ENCODE measurements at regions of chr16 and their contacts with region 1.

Region 1: GRCh38 chr16:11742539-11743307 is at the start of gene TXNDC11:
- DNase-seq: peak; percentile 98 to 100 (median 100)
- ATAC-seq: peak; percentile 98
- H3K4me3 ChIP-seq: peak within 1 kb of the TSS; percentile 92
- H3K4me3 Mint-ChIP-seq: peak within 1 kb of the TSS; percentile 91 to 98 (median 94)
- H3K27ac ChIP-seq: peak within 1 kb of the TSS; percentile 90
- H3K27ac Mint-ChIP-seq: peak within 1 kb of the TSS; percentile 91 to 99 (median 98)
- H3K4me1 ChIP-seq: peaks cover 26 to 28% of the 10 kb centered on the region in 2 donors
- H3K4me1 Mint-ChIP-seq: peaks cover 39 to 55% (median 51%) of the 10 kb centered on the region in 7 donors
- H3K27me3 ChIP-seq: no peaks in the 10 kb centered on the region
- H3K27me3 Mint-ChIP-seq: no peaks in the 10 kb centered on the region
- total RNA-seq, gene TXNDC11: 41.2 to 80.5 (median 55.1) TPM

Region 2: DNA sequence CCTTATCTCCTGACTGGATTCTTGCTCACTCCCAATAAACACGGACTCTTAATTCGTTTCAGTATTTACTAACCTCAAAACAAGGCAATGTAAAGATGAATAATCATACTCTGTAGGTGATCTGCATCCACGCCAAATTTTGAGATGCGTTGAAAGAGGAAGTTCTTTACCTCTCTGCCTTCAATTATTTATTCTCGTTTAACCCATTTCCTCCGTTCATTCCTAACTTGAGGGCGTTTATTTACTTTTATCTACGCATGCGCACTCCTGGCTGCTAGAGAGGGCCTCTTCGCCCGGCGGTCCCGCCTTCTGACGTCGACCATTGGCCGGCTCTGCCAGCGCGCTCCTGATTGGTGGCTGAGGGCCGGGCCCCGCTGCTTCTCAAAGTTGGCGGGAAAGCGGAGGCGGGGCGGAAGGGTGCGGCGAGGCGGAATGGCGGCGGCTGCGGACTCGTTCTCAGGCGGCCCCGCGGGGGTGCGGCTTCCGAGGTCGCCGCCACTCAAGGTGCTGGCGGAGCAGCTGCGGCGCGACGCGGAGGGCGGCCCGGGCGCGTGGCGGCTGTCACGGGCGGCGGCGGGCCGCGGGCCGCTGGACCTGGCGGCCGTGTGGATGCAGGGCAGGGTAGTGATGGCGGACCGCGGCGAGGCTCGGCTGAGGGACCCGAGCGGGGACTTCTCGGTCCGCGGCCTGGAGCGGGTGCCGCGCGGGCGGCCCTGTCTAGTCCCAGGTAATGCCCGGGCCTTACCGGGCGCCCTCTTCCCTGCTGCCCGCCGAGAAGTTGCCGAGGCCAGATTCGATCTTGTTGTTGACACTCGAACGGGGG is 397.5 kb before region 1 on chr16 and contains the start of gene RMI2:
- CTCF ChIA-PET with region 1: no interaction called
- POLR2A ChIA-PET with region 1: no interaction called
- intact Hi-C with region 1: loop called in 1 of 2 experiments (anchors 1 kb)
- DNase-seq: peak; percentile 90 to 98 (median 95)
- ATAC-seq: peak; percentile 99
- H3K4me3 ChIP-seq: peak within 1 kb of the TSS; percentile 44
- H3K4me3 Mint-ChIP-seq: peak within 1 kb of the TSS; percentile 79 to 98 (median 92)
- H3K27ac ChIP-seq: peak within 1 kb of the TSS; percentile 65
- H3K27ac Mint-ChIP-seq: peak within 1 kb of the TSS; percentile 58 to 99 (median 83)
- H3K4me1 ChIP-seq: no peaks in the 10 kb centered on the region
- H3K4me1 Mint-ChIP-seq: peaks cover 10 to 49% (median 24%) of the 10 kb centered on the region in 7 donors
- H3K27me3 ChIP-seq: no peaks in the 10 kb centered on the region
- H3K27me3 Mint-ChIP-seq: no peaks in the 10 kb centered on the region
- total RNA-seq, gene RMI2: 1.8 to 57.0 (median 3.3) TPM

Region 3: GRCh38 chr16:11667824-11668622 is 74.7 kb before region 1 on chr16 and contains the start of gene SNN:
- CTCF ChIA-PET with region 1: no interaction called
- POLR2A ChIA-PET with region 1: interaction called, 5 read pairs
- intact Hi-C with region 1: loop called (anchors 1 kb)
- DNase-seq: peak; percentile 76 to 91 (median 83)
- ATAC-seq: peak; percentile 89
- H3K4me3 ChIP-seq: peak within 1 kb of the TSS; percentile 77
- H3K4me3 Mint-ChIP-seq: peak within 1 kb of the TSS; percentile 88 to 96 (median 91)
- H3K27ac ChIP-seq: peak within 1 kb of the TSS; percentile 85
- H3K27ac Mint-ChIP-seq: peak within 1 kb of the TSS; percentile 85 to 98 (median 96)
- H3K4me1 ChIP-seq: peaks cover 36 to 80% of the 10 kb centered on the region in 2 donors
- H3K4me1 Mint-ChIP-seq: peaks cover 53 to 87% (median 71%) of the 10 kb centered on the region in 7 donors
- H3K27me3 ChIP-seq: no peaks in the 10 kb centered on the region
- H3K27me3 Mint-ChIP-seq: no peaks in the 10 kb centered on the region
- total RNA-seq, gene SNN: 17.0 to 86.8 (median 34.4) TPM

Region 4: GRCh38 chr16:11816103-11816502 is 73.4 kb after region 1 on chr16:
- CTCF ChIA-PET with region 1: interaction called, 6 read pairs
- POLR2A ChIA-PET with region 1: interaction called, 3 read pairs
- intact Hi-C with region 1: loop called in 1 of 2 experiments (anchors 1 kb)
- DNase-seq: no peak
- ATAC-seq: no peak
- H3K4me3 ChIP-seq: no peak overlapping the region
- H3K4me3 Mint-ChIP-seq: no peak overlapping the region
- H3K27ac ChIP-seq: no peak overlapping the region
- H3K27ac Mint-ChIP-seq: no peak overlapping the region
- H3K4me1 ChIP-seq: no peaks in the 10 kb centered on the region
- H3K4me1 Mint-ChIP-seq: peaks cover 0 to 6% (median 3%) of the 10 kb centered on the region in 7 donors
- H3K27me3 ChIP-seq: no peaks in the 10 kb centered on the region
- H3K27me3 Mint-ChIP-seq: no peaks in the 10 kb centered on the region

Region 5: DNA sequence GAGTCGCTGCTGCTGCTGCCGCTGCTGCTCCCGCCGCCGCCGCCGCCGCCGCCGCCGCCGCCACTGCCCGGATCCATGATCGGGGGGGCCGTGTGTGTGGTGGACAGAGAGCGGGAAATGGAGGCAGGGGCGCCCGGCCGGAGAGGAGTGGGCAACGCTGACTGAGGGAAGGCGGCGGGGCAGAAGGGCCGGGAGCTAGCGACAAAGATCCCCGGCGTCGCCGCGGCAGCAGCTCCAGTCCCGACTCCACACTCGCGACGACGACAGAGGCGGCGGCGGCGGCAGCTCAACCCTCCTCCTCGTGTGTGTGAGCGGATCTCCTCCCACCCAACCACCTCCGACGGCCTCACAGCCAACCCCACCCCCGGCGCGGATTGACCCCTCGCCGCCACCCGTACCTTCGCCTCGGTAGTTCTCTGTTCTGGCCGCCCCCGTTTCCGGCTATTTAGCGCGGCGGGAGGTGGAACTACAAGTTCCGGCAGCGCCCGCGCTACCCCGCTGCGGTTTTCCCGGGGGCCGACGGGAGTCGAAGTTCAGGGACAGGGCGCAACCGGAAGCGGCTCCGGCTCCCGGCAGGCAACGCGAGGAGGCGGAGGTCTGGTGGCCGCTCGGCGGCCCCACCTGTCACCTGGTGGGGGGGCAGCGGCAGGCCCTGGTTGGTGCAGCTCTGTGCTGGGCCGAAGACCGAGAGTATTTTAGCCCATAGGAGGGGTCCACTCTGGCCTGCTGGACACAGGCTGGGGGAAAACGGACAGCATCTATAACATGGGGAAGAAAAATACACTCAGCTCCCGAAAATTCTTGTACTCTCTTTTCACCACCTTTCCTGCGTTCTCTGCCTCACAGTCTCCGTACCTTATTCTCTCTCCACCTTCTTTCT is 173.2 kb after region 1 on chr16 and contains the start of gene GSPT1:
- CTCF ChIA-PET with region 1: no interaction called
- POLR2A ChIA-PET with region 1: interaction called, 5 read pairs
- intact Hi-C with region 1: loop called (anchors 1 kb)
- DNase-seq: peak; percentile 96 to 100 (median 99)
- ATAC-seq: peak; percentile 94
- H3K4me3 ChIP-seq: peak within 1 kb of the TSS; percentile 74
- H3K4me3 Mint-ChIP-seq: peak within 1 kb of the TSS; percentile 85 to 99 (median 96)
- H3K27ac ChIP-seq: peak within 1 kb of the TSS; percentile 87
- H3K27ac Mint-ChIP-seq: peak within 1 kb of the TSS; percentile 87 to 98 (median 95)
- H3K4me1 ChIP-seq: peaks cover 13 to 24% of the 10 kb centered on the region in 2 donors
- H3K4me1 Mint-ChIP-seq: peaks cover 23 to 37% (median 34%) of the 10 kb centered on the region in 7 donors
- H3K27me3 ChIP-seq: no peaks in the 10 kb centered on the region
- H3K27me3 Mint-ChIP-seq: peaks cover 0 to 10% (median 0%) of the 10 kb centered on the region in 5 donors
- total RNA-seq, gene GSPT1: 92.8 to 148 (median 101) TPM

Region 6: DNA sequence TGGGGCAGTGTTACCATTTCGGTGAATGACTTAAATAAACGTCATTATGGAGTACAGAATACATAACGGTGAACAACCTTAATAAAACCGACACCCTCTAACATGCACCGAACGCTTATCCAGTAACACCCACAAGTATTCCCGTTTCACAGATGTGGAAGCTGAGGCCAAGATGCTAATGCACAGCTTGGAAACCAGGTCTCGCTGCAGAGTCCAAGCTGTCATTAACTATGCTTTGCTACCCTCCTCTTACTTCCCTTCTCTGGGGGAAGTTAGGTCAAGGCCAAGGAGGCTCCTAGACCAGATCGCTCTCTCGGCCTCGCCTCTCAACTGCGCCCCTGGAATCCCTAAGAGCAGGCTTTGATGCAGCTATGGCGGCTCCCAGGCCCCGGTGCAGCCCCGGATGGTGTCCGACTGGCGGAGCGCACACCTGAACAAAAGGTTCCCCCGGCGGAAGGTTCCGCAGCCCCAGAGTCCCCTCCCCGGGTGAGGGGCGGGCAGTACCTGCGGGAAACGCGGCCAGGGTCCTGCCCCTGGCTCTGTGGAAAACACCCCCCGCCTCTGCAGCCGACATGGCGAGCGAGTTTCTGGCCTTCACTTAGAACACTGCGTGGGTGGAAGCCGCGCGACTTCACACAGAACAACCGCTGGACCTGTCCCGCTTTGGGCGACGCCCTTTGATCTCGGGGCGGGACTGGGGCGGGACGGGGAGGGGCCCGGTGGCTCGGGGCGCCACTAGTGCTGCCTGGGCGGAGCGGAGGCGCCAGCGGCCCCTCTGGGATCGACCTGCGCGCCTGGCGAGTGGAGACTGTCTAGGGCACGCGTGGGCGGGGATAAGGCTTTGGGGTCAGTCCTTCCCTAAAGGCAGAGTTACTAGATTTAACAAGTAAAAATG is 1060.7 kb after region 1 on chr16 and contains the start of gene CPPED1:
- CTCF ChIA-PET with region 1: interaction called, 3 read pairs
- POLR2A ChIA-PET with region 1: no interaction called
- intact Hi-C with region 1: loop called in 1 of 2 experiments (anchors 5 kb)
- DNase-seq: peak; percentile 85 to 98 (median 91)
- ATAC-seq: peak; percentile 95
- H3K4me3 ChIP-seq: peak within 1 kb of the TSS; percentile 76
- H3K4me3 Mint-ChIP-seq: peak within 1 kb of the TSS; percentile 86 to 96 (median 90)
- H3K27ac ChIP-seq: peak within 1 kb of the TSS; percentile 71
- H3K27ac Mint-ChIP-seq: peak within 1 kb of the TSS; percentile 59 to 92 (median 91)
- H3K4me1 ChIP-seq: peaks cover 3 to 9% of the 10 kb centered on the region in 2 donors
- H3K4me1 Mint-ChIP-seq: peaks cover 9 to 37% (median 22%) of the 10 kb centered on the region in 7 donors
- H3K27me3 ChIP-seq: no peaks in the 10 kb centered on the region
- H3K27me3 Mint-ChIP-seq: peaks cover 0 to 8% (median 0%) of the 10 kb centered on the region in 5 donors
- total RNA-seq, gene CPPED1: 2.4 to 56.5 (median 5.3) TPM